ENCODE measurements at regions of chr5 and their contacts with region 1.

Region 1: GRCh38 chr5:180784497-180785097 is 18.0 kb downstream of the MGAT1 start:
- DNase-seq: peak; percentile 82 to 93 (median 90)
- ATAC-seq: peak; percentile 75 to 83
- H3K4me3 ChIP-seq: no peak overlapping the region
- H3K27ac ChIP-seq: no peak overlapping the region
- H3K4me1 ChIP-seq: peaks cover 16% of the 10 kb centered on the region
- H3K27me3 ChIP-seq: no peaks in the 10 kb centered on the region

Region 2: GRCh38 chr5:180868960-180869359 is 84.4 kb after region 1 on chr5:
- intact Hi-C with region 1: loop called in 1 of 4 experiments (anchors 5 kb)
- DNase-seq: peak; percentile 78 to 92 (median 88)
- ATAC-seq: peak; percentile 70 to 82
- H3K4me3 ChIP-seq: no peak overlapping the region
- H3K27ac ChIP-seq: no peak overlapping the region
- H3K4me1 ChIP-seq: peaks cover 2% of the 10 kb centered on the region
- H3K27me3 ChIP-seq: no peaks in the 10 kb centered on the region

Region 3: DNA sequence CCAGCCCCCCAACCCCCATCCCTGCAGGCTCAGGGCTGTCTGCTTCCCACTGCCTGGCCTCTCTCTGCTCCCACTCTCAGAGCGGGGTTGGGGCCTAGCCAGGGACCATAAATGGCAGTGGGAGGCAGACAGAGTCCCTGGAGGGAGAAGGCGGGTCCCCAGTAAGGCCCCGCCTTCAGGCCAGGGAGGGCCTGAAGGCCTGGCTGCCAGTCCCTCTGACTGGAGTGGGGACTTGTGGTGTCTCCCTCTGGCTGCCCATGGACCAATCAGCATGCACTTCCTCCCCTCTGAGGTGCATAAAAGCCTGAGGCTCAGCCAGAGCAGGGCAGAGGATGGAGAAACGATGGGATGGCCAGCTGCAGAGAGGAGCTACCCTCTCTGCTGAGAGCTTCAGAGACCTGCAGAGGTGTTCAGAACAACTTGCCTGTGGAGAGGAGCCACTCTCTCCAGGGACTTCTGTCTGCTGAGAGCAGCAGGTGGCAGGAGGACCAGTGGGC is 252.8 kb after region 1 on chr5:
- intact Hi-C with region 1: loop called in 1 of 4 experiments (anchors 10 kb)
- DNase-seq: no peak
- ATAC-seq: peak; percentile 29 to 32
- H3K4me3 ChIP-seq: no peak overlapping the region
- H3K27ac ChIP-seq: no peak overlapping the region
- H3K4me1 ChIP-seq: no peaks in the 10 kb centered on the region
- H3K27me3 ChIP-seq: no peaks in the 10 kb centered on the region

Region 4: GRCh38 chr5:181159286-181159829 is 374.8 kb after region 1 on chr5:
- intact Hi-C with region 1: loop called in 3 of 4 experiments (anchors 10 kb)
- DNase-seq: peak; percentile 80 to 93 (median 93)
- ATAC-seq: peak; percentile 87 to 88
- H3K4me3 ChIP-seq: no peak overlapping the region
- H3K27ac ChIP-seq: no peak overlapping the region
- H3K4me1 ChIP-seq: no peaks in the 10 kb centered on the region
- H3K27me3 ChIP-seq: no peaks in the 10 kb centered on the region